ENCODE measurements at regions of chr7 and their contacts with region 1.

Region 1: DNA sequence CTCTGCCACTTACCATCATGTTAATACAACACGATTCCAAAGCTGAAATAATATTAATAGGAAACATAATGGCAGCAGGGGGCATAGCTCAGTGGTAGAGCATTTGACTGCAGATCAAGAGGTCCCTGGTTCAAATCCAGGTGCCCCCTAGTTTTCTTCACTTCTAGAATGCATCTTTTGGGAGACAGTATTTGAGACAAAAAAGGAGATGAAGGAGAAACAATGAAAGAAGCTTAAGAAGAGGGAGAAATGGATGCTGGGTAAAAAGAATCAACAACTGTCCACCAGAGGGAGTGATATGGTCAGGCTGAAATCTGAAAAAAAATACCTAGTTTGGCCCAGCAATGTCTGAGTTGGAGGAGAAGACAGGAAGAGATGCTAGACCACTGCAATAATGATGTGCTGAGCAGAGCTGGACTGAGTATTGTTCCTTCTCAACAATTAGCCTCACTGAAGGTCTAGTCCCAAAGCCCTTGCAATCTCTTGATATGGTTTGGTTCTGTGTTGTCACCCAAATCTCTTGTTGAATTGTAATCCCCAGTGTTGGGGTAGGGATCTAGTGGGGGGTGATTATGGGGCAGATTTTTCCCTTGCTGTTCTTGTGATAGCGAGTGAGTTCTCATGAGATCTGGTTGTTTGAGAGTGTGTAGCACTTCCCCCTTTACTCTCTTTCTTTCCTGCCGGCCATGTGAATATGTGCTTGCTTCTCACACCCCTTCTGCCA is 48.3 kb downstream of the ZNF783 start:
- DNase-seq: peak; percentile 87
- ATAC-seq: peak; percentile 95
- H3K4me3 ChIP-seq: no peak overlapping the region
- H3K27ac ChIP-seq: no peak overlapping the region
- H3K4me1 ChIP-seq: no peaks in the 10 kb centered on the region
- H3K27me3 ChIP-seq: no peaks in the 10 kb centered on the region
- CTCF ChIP-seq: peak; percentile 76
- POLR2A ChIP-seq: no peak
- RAD21 ChIP-seq: peak; percentile 60

Region 2: GRCh38 chr7:149321978-149322541 is 11.8 kb after region 1 on chr7:
- CTCF ChIA-PET with region 1: interaction called, 12 read pairs
- POLR2A ChIA-PET with region 1: no interaction called
- dilution Hi-C with region 1: no loop called
- in situ Hi-C with region 1: no loop called
- intact Hi-C with region 1: no loop called
- DNase-seq: peak; percentile 21
- ATAC-seq: peak; percentile 64
- H3K4me3 ChIP-seq: peak overlapping the region; percentile 34; the same call in 1 of the 2 replicates
- H3K27ac ChIP-seq: peak overlapping the region; percentile 9; the same call in 1 of the 2 replicates
- H3K4me1 ChIP-seq: no peaks in the 10 kb centered on the region
- H3K27me3 ChIP-seq: peaks cover 6% of the 10 kb centered on the region
- CTCF ChIP-seq: no peak
- POLR2A ChIP-seq: no peak
- RAD21 ChIP-seq: no peak

Region 3: DNA sequence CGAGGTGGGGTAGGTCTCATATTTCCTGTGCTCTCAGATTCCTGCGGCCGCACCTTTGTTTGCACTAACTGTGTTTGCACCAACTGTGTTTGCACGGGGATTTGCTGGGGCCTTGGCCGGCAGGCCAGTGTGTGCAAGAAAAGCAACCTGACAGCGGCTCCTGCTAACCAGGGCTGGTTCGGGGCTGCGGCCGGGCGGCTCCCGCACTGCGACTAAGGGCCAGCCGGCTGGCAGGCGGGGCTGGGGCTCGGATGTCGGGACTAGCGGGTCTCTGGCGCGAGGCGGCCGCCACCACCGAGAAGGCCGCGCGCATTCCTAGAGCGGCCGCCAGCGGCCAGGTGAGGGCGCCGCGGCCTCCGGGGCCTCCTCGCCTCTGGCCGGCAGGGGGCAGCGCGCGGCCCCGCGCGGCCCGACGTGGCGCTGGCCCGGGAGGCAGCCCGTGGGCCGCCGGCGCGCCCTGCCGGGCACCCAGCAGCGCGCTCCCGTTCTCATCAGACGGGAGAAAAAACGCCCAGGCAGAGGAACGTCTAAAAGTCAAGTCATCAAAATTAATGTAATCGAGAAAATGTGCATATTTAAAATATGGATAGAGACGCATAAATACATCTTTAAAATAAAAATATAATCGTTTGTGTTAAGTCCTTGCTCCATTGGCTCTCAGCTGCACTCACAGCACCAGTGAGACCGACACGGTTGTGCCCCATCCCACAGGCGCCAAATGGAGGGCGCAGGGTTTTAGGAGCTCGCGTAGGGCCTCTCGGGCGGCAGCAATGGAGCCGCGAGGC is 112.0 kb after region 1 on chr7:
- CTCF ChIA-PET with region 1: no interaction called
- POLR2A ChIA-PET with region 1: no interaction called
- dilution Hi-C with region 1: no loop called
- in situ Hi-C with region 1: no loop called
- intact Hi-C with region 1: loop called (anchors 5 kb)
- DNase-seq: peak; percentile 53
- ATAC-seq: peak; percentile 98
- H3K4me3 ChIP-seq: peak overlapping the region; percentile 31
- H3K27ac ChIP-seq: no peak overlapping the region
- H3K4me1 ChIP-seq: no peaks in the 10 kb centered on the region
- H3K27me3 ChIP-seq: no peaks in the 10 kb centered on the region
- CTCF ChIP-seq: peak; percentile 85
- POLR2A ChIP-seq: no peak
- RAD21 ChIP-seq: peak; percentile 32; the same call in 1 of the 2 replicates

Region 4: DNA sequence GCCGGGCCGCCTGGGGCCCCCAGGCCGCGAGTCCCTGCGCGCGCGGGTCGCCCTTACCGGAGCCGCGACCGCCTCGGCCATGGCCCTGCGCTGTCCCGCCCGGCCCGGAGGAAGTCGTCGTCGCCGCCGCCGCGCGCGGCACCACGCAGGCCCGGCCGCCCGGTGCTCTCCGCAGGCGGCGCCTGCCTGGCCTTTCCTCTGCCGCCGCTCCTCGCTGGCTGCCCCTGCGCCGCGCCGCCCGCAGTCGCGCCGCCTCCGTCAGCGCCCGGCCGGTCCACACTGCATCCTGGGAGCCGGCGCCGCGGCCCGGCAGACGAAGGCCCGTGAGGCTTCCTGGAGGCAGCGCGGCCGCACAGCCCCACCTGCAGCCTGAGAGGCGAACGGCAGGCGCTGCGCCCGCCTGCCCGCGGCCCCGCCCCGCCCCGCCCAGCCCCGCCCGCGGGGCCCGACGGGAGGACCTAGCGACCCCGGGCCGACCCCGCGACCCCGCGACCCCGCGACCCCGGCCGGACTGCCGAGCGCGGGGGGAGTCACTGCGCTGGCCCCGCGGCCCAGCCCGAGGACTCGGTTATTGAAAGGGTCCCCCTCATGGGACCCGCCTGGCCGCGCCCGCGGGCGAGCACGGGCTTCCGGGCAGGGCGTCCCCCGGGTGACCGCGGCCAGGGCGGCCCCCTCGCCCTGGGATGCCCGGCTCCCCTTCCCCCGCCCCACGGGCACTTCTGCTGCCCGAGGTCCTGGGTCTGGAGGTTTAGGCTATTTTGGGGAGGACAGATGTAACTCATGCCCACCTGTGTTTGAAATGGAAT is 187.4 kb after region 1 on chr7 and contains the start of gene ZNF746:
- CTCF ChIA-PET with region 1: no interaction called
- POLR2A ChIA-PET with region 1: no interaction called
- dilution Hi-C with region 1: no loop called
- in situ Hi-C with region 1: no loop called
- intact Hi-C with region 1: loop called (anchors 1 kb)
- DNase-seq: peak; percentile 76
- ATAC-seq: peak; percentile 91
- H3K4me3 ChIP-seq: peak within 1 kb of the TSS; percentile 100
- H3K27ac ChIP-seq: peak within 1 kb of the TSS; percentile 100
- H3K4me1 ChIP-seq: peaks cover 11% of the 10 kb centered on the region
- H3K27me3 ChIP-seq: peaks cover 15% of the 10 kb centered on the region
- CTCF ChIP-seq: peak; percentile 85
- POLR2A ChIP-seq: peak; percentile 58; the same call in 1 of the 2 replicates
- RAD21 ChIP-seq: peak; percentile 65
- total RNA-seq, gene ZNF746: 6.6 and 6.7 TPM in 2 replicates

Region 5: GRCh38 chr7:149598721-149599306 is 288.5 kb after region 1 on chr7:
- CTCF ChIA-PET with region 1: interaction called, 3 read pairs
- POLR2A ChIA-PET with region 1: no interaction called
- dilution Hi-C with region 1: no loop called
- in situ Hi-C with region 1: no loop called
- intact Hi-C with region 1: loop called (anchors 10 kb)
- DNase-seq: peak; percentile 38
- ATAC-seq: peak; percentile 79
- H3K4me3 ChIP-seq: no peak overlapping the region
- H3K27ac ChIP-seq: no peak overlapping the region
- H3K4me1 ChIP-seq: no peaks in the 10 kb centered on the region
- H3K27me3 ChIP-seq: no peaks in the 10 kb centered on the region
- CTCF ChIP-seq: peak; percentile 37
- POLR2A ChIP-seq: no peak
- RAD21 ChIP-seq: peak; percentile 44

Region 6: DNA sequence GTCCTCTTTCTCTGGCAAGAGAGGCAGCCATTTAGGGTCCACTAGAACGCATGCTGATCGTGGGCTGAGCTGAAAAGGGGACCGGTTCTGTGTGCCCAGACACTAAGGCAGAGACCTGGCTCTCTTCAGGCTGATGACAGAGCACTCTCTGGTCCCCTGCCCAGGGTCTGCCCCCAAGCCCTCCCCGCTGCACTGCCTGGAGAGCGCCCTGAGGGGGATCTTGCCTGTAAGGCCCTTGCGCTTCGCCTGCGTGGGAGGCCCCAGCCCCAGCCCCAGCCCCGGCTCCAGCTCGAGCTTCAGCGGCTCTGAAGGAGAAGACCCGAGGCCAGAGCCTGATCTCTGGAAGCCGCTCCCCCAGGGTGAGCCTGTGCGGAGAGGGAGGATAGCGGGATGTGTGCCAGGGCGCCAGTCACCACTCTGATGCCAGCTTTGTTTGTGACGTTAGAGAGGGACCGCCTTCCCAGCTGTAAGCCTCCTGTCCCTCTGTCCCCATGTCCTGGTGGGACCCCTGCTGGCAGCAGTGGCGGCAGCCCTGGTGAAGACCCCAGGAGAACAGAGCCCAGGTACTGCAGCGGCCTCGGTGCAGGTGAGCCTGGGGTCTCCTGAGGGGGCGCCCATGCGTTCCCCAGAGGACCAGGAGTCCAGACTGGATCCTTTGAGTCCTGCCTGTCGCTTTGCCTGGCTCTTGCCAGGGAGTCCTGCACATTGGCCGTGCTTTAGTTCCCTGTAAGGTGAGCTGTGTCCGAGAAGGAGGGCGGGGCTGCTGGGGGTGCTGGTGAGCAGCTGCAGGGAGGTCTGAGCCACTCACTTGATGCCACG is 419.9 kb after region 1 on chr7:
- CTCF ChIA-PET with region 1: no interaction called
- POLR2A ChIA-PET with region 1: no interaction called
- dilution Hi-C with region 1: no loop called
- in situ Hi-C with region 1: no loop called
- intact Hi-C with region 1: no loop called
- DNase-seq: no peak
- ATAC-seq: no peak
- H3K4me3 ChIP-seq: no peak overlapping the region
- H3K27ac ChIP-seq: no peak overlapping the region
- H3K4me1 ChIP-seq: no peaks in the 10 kb centered on the region
- H3K27me3 ChIP-seq: no peaks in the 10 kb centered on the region
- CTCF ChIP-seq: no peak
- POLR2A ChIP-seq: no peak
- RAD21 ChIP-seq: no peak